ENCODE measurements at regions of chr1 and their contacts with region 1.

Region 1: GRCh38 chr1:114927401-114927800 is 72.7 kb downstream of the SYCP1 start:
- DNase-seq: no peak
- H3K4me3 ChIP-seq: no peak overlapping the region
- H3K27ac ChIP-seq: no peak overlapping the region
- H3K4me1 ChIP-seq: no peaks in the 10 kb centered on the region
- H3K27me3 ChIP-seq: no peaks in the 10 kb centered on the region
- CTCF ChIP-seq: no peak
- POLR2A ChIP-seq: no peak

Region 2: DNA sequence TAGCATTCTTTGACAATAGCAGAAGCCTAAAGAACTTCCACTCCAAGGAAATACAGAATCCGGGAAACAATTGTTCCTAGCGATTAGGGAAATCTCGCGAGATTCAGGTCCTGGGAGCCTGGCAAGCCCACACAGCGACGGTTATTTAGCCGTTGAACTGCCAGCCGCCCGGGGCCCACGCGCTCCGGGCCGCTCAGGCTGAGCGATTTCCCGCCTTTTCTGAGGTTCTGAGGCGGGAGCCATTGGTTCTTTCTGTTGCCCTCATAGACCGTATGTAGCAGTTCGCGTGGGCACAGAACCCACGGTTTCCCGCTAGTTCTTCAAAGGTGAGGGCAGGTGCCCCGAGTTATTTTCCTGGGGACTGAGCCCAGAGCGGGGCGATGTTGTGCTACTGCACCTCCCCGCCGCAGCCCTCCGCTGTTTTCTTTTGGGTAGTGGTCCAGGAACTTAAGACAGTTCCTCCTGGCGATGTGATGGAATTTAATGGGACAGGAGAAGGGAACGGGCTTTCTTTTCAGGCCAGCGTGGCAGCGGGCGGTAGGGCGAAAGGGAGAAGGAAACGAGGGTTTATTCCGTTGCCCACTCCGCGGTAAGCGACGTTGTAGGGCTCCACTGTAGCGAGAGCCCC is 72.6 kb before region 1 on chr1 and contains the start of gene SYCP1:
- intact Hi-C with region 1: loop called (anchors 10 kb)
- DNase-seq: no peak
- H3K4me3 ChIP-seq: no peak within 1 kb of the TSS
- H3K27ac ChIP-seq: no peak within 1 kb of the TSS
- H3K4me1 ChIP-seq: no peaks in the 10 kb centered on the region
- H3K27me3 ChIP-seq: peaks cover 4% of the 10 kb centered on the region
- CTCF ChIP-seq: no peak
- POLR2A ChIP-seq: no peak
- total RNA-seq, gene SYCP1: 9.3 TPM in 1 of 2 donors, not detected in the other